Naive thymus-derived CD4-positive, alpha-beta T cell (primary cell): ENCODE measurements at regions of chr6 and their contacts with region 1.

Region 1: GRCh38 chr6:30556066-30556905 is at the start of gene GNL1:
- DNase-seq: peak; percentile 95 to 99 (median 99)
- ATAC-seq: peak; percentile 94
- H3K4me3 ChIP-seq: peak within 1 kb of the TSS; percentile 97
- H3K4me3 Mint-ChIP-seq: peak within 1 kb of the TSS; percentile 92 to 100 (median 98)
- H3K27ac ChIP-seq: peak within 1 kb of the TSS; percentile 97
- H3K27ac Mint-ChIP-seq: peak within 1 kb of the TSS; percentile 98 to 100 (median 99)
- H3K4me1 ChIP-seq: peaks cover 8 to 19% of the 10 kb centered on the region in 2 donors
- H3K4me1 Mint-ChIP-seq: peaks cover 25 to 58% (median 45%) of the 10 kb centered on the region in 7 donors
- H3K27me3 ChIP-seq: no peaks in the 10 kb centered on the region
- H3K27me3 Mint-ChIP-seq: no peaks in the 10 kb centered on the region
- total RNA-seq, gene GNL1: 56.0 to 190 (median 73.1) TPM

Region 2: GRCh38 chr6:30066577-30067459 is 489.5 kb before region 1 on chr6 and contains the start of gene PPP1R11:
- CTCF ChIA-PET with region 1: no interaction called
- POLR2A ChIA-PET with region 1: no interaction called
- intact Hi-C with region 1: loop called in 1 of 2 experiments (anchors 2 kb)
- DNase-seq: peak; percentile 84 to 100 (median 99)
- ATAC-seq: peak; percentile 99
- H3K4me3 ChIP-seq: peak within 1 kb of the TSS; percentile 94
- H3K4me3 Mint-ChIP-seq: peak within 1 kb of the TSS; percentile 87 to 100 (median 98)
- H3K27ac ChIP-seq: peak within 1 kb of the TSS; percentile 96
- H3K27ac Mint-ChIP-seq: peak within 1 kb of the TSS; percentile 96 to 100 (median 99)
- H3K4me1 ChIP-seq: peaks cover 28 to 41% of the 10 kb centered on the region in 2 donors
- H3K4me1 Mint-ChIP-seq: peaks cover 43 to 77% (median 71%) of the 10 kb centered on the region in 7 donors
- H3K27me3 ChIP-seq: no peaks in the 10 kb centered on the region
- H3K27me3 Mint-ChIP-seq: peaks cover 10 to 22% (median 16%) of the 10 kb centered on the region in 5 donors
- total RNA-seq, gene PPP1R11: 49.4 to 67.1 (median 62.7) TPM

Region 3: GRCh38 chr6:30326526-30327260 is 229.6 kb before region 1 on chr6 and contains the start of gene TRIM39:
- CTCF ChIA-PET with region 1: no interaction called
- POLR2A ChIA-PET with region 1: interaction called, 5 read pairs
- intact Hi-C with region 1: loop called (anchors 2 kb)
- DNase-seq: peak; percentile 88 to 94 (median 92)
- ATAC-seq: peak; percentile 76
- H3K4me3 ChIP-seq: peak within 1 kb of the TSS; percentile 70
- H3K4me3 Mint-ChIP-seq: peak within 1 kb of the TSS; percentile 93 to 99 (median 97)
- H3K27ac ChIP-seq: peak within 1 kb of the TSS; percentile 100
- H3K27ac Mint-ChIP-seq: peak within 1 kb of the TSS; percentile 92 to 100 (median 99)
- H3K4me1 ChIP-seq: peaks cover 34 to 48% of the 10 kb centered on the region in 2 donors
- H3K4me1 Mint-ChIP-seq: peaks cover 42 to 70% (median 63%) of the 10 kb centered on the region in 7 donors
- H3K27me3 ChIP-seq: no peaks in the 10 kb centered on the region
- H3K27me3 Mint-ChIP-seq: no peaks in the 10 kb centered on the region
- total RNA-seq, gene TRIM39: 12.8 to 42.1 (median 26.4) TPM

Region 4: GRCh38 chr6:30489081-30490025 is 66.9 kb before region 1 on chr6 and contains the start of gene HLA-E:
- CTCF ChIA-PET with region 1: interaction called, 263 read pairs
- POLR2A ChIA-PET with region 1: interaction called, 6 read pairs
- intact Hi-C with region 1: loop called (anchors 1 kb)
- DNase-seq: peak; percentile 62 to 99 (median 95)
- ATAC-seq: peak; percentile 89
- H3K4me3 ChIP-seq: peak within 1 kb of the TSS; percentile 83
- H3K4me3 Mint-ChIP-seq: peak within 1 kb of the TSS; percentile 94 to 100 (median 99)
- H3K27ac ChIP-seq: peak within 1 kb of the TSS; percentile 97
- H3K27ac Mint-ChIP-seq: peak within 1 kb of the TSS; percentile 96 to 99 (median 99)
- H3K4me1 ChIP-seq: peaks cover 26 to 33% of the 10 kb centered on the region in 2 donors
- H3K4me1 Mint-ChIP-seq: peaks cover 33 to 61% (median 46%) of the 10 kb centered on the region in 7 donors
- H3K27me3 ChIP-seq: no peaks in the 10 kb centered on the region
- H3K27me3 Mint-ChIP-seq: peaks cover 0 to 7% (median 0%) of the 10 kb centered on the region in 5 donors
- total RNA-seq, gene HLA-E: 614 to 1,412 (median 1,095) TPM

Region 5: GRCh38 chr6:30571075-30571768 is 14.9 kb after region 1 on chr6 and contains the start of gene ABCF1:
- CTCF ChIA-PET with region 1: interaction called, 9 read pairs
- POLR2A ChIA-PET with region 1: interaction called, 61 read pairs
- intact Hi-C with region 1: loop called (anchors 1 kb)
- DNase-seq: peak; percentile 98 to 100 (median 99)
- ATAC-seq: peak; percentile 99
- H3K4me3 ChIP-seq: peak within 1 kb of the TSS; percentile 94
- H3K4me3 Mint-ChIP-seq: peak within 1 kb of the TSS; percentile 94 to 100 (median 98)
- H3K27ac ChIP-seq: peak within 1 kb of the TSS; percentile 98
- H3K27ac Mint-ChIP-seq: peak within 1 kb of the TSS; percentile 96 to 100 (median 99)
- H3K4me1 ChIP-seq: peaks cover 33 to 38% of the 10 kb centered on the region in 2 donors
- H3K4me1 Mint-ChIP-seq: peaks cover 55 to 79% (median 64%) of the 10 kb centered on the region in 7 donors
- H3K27me3 ChIP-seq: no peaks in the 10 kb centered on the region
- H3K27me3 Mint-ChIP-seq: peaks cover 0 to 4% (median 0%) of the 10 kb centered on the region in 5 donors
- total RNA-seq, gene ABCF1: 65.1 to 116 (median 86.6) TPM

Region 6: DNA sequence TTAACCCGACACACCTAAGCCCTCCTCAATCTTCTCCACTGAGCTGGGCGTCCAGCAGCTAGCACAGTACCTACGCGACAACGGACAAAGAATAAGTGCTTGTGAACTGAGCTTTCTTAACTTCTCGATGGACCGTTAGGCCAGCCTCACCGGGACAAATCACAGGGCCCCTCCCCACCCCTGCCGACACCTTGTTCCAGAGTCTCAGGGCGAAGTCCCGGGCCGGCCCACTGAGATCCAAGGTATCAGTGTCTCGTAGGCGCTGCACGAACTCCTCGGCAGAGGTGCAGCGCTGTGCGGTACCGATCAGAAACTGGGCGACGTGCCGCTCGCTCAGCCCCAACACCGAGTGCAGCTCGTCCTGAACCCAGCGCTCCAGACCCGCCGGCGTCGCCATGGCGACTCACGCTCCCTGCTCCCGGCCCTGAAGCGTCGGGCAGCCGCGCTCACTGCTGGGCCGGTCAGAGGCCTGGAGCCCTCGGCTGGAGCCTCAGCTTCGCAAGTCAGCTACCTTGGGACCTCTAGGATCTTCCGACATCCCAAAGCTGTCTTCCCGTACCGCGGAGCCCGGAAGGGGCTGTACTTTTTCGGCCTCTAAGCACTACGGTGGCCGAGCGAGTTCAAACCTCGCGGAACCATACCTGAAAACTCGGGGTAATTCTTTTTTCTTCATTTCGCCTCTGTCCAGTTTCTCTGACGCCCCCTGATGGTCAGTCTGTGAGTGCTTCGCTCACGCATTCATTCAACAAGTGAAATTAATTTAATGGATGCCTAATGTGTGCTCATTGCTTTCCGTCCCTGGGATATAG is 116.4 kb after region 1 on chr6 and contains the start of gene DHX16:
- CTCF ChIA-PET with region 1: no interaction called
- POLR2A ChIA-PET with region 1: no interaction called
- intact Hi-C with region 1: loop called in 1 of 2 experiments (anchors 1 kb)
- DNase-seq: peak; percentile 65 to 85 (median 83)
- ATAC-seq: peak; percentile 93
- H3K4me3 ChIP-seq: peak within 1 kb of the TSS; percentile 74
- H3K4me3 Mint-ChIP-seq: peak within 1 kb of the TSS; percentile 87 to 94 (median 91)
- H3K27ac ChIP-seq: peak within 1 kb of the TSS; percentile 77
- H3K27ac Mint-ChIP-seq: peak within 1 kb of the TSS; percentile 70 to 93 (median 91)
- H3K4me1 ChIP-seq: peaks cover 8 to 15% of the 10 kb centered on the region in 2 donors
- H3K4me1 Mint-ChIP-seq: peaks cover 28 to 46% (median 43%) of the 10 kb centered on the region in 7 donors
- H3K27me3 ChIP-seq: no peaks in the 10 kb centered on the region
- H3K27me3 Mint-ChIP-seq: no peaks in the 10 kb centered on the region
- total RNA-seq, gene DHX16: 25.9 to 51.5 (median 46.7) TPM

Region 7: GRCh38 chr6:30793521-30794194 is 237.4 kb after region 1 on chr6:
- CTCF ChIA-PET with region 1: no interaction called
- POLR2A ChIA-PET with region 1: no interaction called
- intact Hi-C with region 1: no loop called
- DNase-seq: peak in 7 of 9 donors; percentile 22 to 69 (median 57)
- ATAC-seq: peak; percentile 94
- H3K4me3 ChIP-seq: peak overlapping the region; percentile 12
- H3K4me3 Mint-ChIP-seq: peak overlapping the region; percentile 64 to 85 (median 78)
- H3K27ac ChIP-seq: peak overlapping the region; percentile 71
- H3K27ac Mint-ChIP-seq: peak overlapping the region; percentile 90 to 99 (median 96)
- H3K4me1 ChIP-seq: peaks cover 16 to 27% of the 10 kb centered on the region in 2 donors
- H3K4me1 Mint-ChIP-seq: peaks cover 29 to 72% (median 58%) of the 10 kb centered on the region in 7 donors
- H3K27me3 ChIP-seq: no peaks in the 10 kb centered on the region
- H3K27me3 Mint-ChIP-seq: no peaks in the 10 kb centered on the region

Region 8: GRCh38 chr6:30907758-30908591 is 351.7 kb after region 1 on chr6 and contains the start of gene GTF2H4:
- CTCF ChIA-PET with region 1: no interaction called
- POLR2A ChIA-PET with region 1: no interaction called
- intact Hi-C with region 1: loop called in 1 of 2 experiments (anchors 5 kb)
- DNase-seq: peak; percentile 77 to 96 (median 89)
- ATAC-seq: peak; percentile 99
- H3K4me3 ChIP-seq: peak within 1 kb of the TSS; percentile 90
- H3K4me3 Mint-ChIP-seq: peak within 1 kb of the TSS; percentile 95 to 100 (median 99)
- H3K27ac ChIP-seq: peak within 1 kb of the TSS; percentile 78
- H3K27ac Mint-ChIP-seq: peak within 1 kb of the TSS; percentile 72 to 95 (median 82)
- H3K4me1 ChIP-seq: peaks cover 6 to 9% of the 10 kb centered on the region in 2 donors
- H3K4me1 Mint-ChIP-seq: peaks cover 15 to 34% (median 22%) of the 10 kb centered on the region in 7 donors
- H3K27me3 ChIP-seq: no peaks in the 10 kb centered on the region
- H3K27me3 Mint-ChIP-seq: no peaks in the 10 kb centered on the region
- total RNA-seq, gene GTF2H4: 18.8 to 42.3 (median 32.2) TPM